Activated CD4-positive, alpha-beta memory T cell treated with anti-CD3 and anti-CD28 coated beads, Interleukin-2, amount 10 ng/mL, durations not matched to agents 7 days and 5 days (primary cell): ENCODE measurements at regions of chr3 and their contacts with region 1.

Region 1: DNA sequence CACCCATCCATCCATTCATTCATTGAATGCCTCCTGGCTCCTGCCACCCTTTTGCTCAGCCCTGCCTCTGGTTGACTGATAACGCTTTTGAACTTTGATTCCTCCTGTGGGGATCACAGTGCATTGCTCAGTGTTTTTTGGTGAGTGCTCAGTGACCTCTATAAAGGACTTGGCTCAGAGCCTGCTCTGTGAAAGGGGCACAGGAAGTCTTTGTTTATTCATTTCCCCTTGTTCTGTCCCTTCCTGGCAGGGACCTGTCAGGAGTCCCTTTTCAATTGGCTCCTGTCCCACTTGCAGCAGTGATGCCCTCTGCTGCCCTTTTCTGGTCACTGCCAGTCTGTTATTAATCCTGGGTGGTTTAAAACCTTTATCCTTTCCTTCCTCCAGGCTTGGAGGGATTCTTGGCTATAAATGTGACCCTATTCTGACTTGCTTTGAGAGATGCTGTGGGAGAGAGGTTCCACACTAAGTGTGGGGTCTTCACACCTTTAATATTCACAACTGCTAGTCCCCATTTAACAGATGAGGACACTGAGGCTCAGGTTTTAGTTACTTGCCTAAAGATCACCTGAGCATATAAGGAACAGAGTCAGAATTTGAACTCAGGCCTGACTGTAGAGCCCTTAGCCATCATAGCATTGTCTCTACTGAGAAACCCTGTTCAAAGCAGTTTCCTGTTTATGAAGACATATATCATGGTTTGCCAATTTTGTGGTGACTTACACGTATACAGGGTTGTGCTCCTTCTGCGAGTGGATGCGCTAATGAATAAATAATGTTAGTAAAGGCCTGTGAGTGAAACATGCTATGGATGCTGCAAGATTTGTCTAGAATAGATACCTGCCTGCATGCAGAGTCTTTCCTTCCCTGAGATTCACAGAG is 23.2 kb upstream of the TATDN2 start:
- DNase-seq: peak; percentile 76
- H3K4me3 Mint-ChIP-seq: peak overlapping the region; percentile 1
- H3K27ac Mint-ChIP-seq: peak overlapping the region; percentile 65
- H3K4me1 Mint-ChIP-seq: peaks cover 81% of the 10 kb centered on the region
- H3K27me3 Mint-ChIP-seq: no peaks in the 10 kb centered on the region

Region 2: DNA sequence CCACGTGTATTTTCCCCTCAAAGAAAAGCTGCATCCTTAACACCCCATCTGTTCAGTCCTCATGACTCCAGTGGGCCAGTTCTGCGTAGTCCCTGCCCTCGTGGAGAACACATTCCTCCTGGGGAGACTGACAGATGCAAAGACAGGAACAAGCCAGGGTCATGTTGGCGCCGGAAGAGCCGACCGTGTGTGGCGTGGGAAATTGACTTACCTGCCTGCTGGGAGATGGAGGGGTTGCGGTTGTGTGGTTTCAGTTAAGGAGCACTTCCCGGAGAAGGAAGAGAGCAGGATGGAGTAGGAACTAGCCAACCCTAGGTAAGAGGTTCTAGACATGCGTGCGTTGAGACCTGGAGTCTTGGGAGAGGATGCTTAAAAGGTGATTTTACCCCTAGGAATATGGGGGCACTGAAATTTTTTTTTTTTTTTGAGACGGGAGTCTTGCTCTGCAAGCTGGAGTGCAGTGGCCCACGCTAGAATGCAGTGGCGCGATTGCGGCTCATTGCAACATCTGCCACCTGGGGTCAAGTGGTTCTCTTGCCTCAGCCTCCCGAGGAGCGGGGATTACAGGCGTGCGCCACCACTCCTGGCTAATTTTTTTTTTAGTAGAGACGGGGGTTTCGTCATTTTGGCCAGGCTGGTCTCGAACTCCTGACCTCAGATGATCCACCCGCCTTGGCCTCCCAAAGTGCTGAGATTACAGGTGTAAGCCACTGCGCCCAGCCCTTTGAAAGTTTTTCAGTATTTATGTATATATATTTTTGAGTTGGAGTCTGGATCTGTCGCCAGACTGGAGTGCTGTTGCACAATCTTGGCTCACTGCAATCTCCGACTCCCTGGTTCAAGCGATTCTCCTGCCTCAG is 82.1 kb before region 1 on chr3:
- CTCF ChIA-PET with region 1: interaction called, 10 read pairs
- POLR2A ChIA-PET with region 1: interaction called, 11 read pairs
- DNase-seq: peak; percentile 32
- H3K4me3 Mint-ChIP-seq: peak overlapping the region; percentile 85
- H3K27ac Mint-ChIP-seq: peak overlapping the region; percentile 96
- H3K4me1 Mint-ChIP-seq: peaks cover 42% of the 10 kb centered on the region
- H3K27me3 Mint-ChIP-seq: no peaks in the 10 kb centered on the region

Region 3: GRCh38 chr3:10185804-10186762 is 38.9 kb before region 1 on chr3:
- CTCF ChIA-PET with region 1: interaction called, 12 read pairs
- POLR2A ChIA-PET with region 1: interaction called, 71 read pairs
- DNase-seq: peak; percentile 33
- H3K4me3 Mint-ChIP-seq: peak overlapping the region; percentile 18
- H3K27ac Mint-ChIP-seq: peak overlapping the region; percentile 78
- H3K4me1 Mint-ChIP-seq: peaks cover 55% of the 10 kb centered on the region
- H3K27me3 Mint-ChIP-seq: no peaks in the 10 kb centered on the region

Region 4: DNA sequence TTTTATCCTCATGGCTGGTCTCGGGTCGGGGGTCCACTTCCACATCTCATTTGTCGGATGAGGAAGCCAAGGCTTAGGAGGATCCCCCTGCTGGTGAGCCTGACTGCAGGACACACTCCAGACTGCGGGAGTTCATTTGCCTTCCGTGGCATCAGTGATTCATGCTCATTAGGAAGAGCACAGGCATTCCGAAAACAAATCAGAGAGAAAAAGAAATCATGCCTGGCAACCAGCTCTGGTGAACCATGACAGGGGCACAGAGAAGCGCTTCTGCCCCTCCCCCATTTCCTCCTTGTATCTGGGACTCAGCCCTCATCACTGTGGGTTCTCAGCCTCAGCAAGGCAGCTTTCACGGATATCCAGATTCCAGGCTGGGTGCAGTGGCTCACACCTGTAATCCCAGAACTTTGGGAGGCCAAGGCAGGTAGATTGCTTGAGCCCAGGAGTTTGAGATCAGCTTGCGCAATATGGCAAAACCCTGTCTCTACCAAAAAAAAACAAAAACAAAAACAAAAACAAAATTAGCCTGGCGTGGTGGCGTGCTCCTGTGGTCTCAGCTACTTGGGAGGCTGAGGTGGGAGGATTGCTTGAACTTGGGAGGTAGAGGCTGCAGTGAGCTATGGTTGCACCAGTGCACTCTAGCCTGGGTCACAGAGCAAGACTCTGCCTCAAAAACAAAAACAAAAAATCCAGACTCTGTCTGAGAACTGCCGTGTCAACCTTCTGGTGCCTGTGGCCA is 31.9 kb before region 1 on chr3:
- CTCF ChIA-PET with region 1: interaction called, 13 read pairs
- POLR2A ChIA-PET with region 1: interaction called, 71 read pairs
- DNase-seq: peak; percentile 69
- H3K4me3 Mint-ChIP-seq: peak overlapping the region; percentile 7
- H3K27ac Mint-ChIP-seq: peak overlapping the region; percentile 98
- H3K4me1 Mint-ChIP-seq: peaks cover 82% of the 10 kb centered on the region
- H3K27me3 Mint-ChIP-seq: no peaks in the 10 kb centered on the region

Region 5: GRCh38 chr3:10213156-10213792 is 11.8 kb before region 1 on chr3:
- CTCF ChIA-PET with region 1: interaction called, 4 read pairs
- POLR2A ChIA-PET with region 1: interaction called, 10 read pairs
- DNase-seq: no peak
- H3K4me3 Mint-ChIP-seq: no peak overlapping the region
- H3K27ac Mint-ChIP-seq: no peak overlapping the region
- H3K4me1 Mint-ChIP-seq: peaks cover 14% of the 10 kb centered on the region
- H3K27me3 Mint-ChIP-seq: no peaks in the 10 kb centered on the region

Region 6: DNA sequence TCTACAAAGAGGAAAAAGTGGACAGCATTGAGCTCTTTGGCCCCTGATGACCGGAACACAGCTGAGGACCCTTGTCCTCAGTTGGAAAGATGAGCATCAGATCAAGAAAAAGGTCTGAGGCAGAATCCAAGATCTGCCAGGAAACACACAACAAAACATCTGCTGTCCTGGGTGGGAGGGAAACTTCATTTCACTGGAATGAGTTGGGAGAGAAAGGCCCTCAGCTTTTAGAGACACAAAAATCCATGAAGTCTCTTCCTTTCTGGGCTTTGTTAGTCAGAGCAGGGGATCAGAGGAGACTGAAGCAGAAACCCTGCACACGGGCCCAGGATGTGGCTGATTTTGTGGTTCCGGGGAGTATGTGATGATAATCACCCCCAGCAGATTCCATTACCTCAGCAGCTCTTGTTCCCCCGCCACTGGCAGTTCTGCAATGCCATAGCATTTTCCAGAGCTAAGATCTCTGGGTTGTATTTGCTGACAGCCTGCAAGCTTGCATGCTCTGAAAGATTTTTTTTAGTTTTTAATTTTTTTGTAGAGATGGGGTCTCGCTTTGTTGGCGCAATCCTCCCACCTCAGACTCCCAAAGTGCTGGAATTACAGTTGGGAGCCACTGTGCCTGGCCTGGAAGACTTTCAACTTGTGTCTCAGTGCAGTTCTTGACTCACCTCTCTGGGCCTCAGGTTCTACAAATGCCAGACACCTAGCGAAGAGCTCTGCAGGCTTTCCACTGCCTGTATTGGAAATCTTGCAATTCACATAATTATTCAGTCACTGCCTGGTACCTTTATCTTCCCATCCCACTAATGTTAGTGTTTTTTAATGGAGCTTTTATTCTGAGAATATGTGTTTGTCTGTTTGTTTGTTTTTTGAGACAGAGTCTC is 17.4 kb after region 1 on chr3:
- CTCF ChIA-PET with region 1: interaction called, 7 read pairs
- POLR2A ChIA-PET with region 1: interaction called, 20 read pairs
- DNase-seq: peak; percentile 89
- H3K4me3 Mint-ChIP-seq: peak overlapping the region; percentile 39
- H3K27ac Mint-ChIP-seq: peak overlapping the region; percentile 95
- H3K4me1 Mint-ChIP-seq: peaks cover 62% of the 10 kb centered on the region
- H3K27me3 Mint-ChIP-seq: no peaks in the 10 kb centered on the region

Region 7: DNA sequence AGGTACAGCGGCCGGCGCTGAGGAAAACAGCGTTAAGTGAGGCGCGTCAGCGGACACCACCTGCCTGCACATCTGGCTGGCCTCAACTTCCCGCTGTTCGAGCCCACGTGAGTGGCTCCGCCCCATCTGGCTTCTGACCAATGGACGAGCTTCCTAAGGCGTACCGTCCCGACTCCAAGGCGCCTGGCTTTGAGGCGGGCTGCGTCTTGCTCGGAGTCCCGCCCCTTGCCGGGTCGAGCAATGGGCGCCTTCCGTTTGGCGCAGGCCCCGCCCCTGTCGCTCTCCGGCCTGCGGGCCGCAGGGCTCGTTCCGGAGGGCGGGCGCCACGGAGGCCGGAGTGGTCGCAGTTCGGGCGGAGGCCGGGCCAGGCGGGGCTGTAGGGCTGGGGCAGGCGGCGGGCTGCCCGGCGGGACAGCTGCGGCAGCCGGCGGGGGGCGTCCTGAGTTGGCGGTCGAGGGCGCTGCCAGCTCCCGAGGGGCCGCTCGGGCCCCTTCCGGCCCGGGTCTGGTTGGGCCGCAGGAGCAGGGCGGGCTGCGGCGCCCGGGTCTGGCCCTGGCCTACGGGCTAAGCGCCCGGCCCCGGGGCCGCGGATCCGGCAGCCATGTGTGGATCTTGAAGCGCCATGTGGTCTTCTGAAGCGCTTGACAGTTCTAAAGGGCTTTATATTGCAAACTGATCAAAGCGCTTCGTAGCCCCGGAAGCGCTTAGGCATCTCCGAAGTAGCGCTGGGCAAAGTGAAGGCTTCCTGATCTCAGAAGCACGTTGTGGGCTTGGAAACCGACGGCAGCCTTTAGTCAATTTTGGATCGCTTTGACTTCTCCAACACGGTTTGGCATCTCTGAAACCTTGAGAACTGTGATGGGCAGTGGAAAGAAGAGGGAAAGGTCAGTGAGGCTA is 23.4 kb after region 1 on chr3 and contains the start of gene TATDN2:
- CTCF ChIA-PET with region 1: interaction called, 7 read pairs
- POLR2A ChIA-PET with region 1: interaction called, 20 read pairs
- DNase-seq: peak; percentile 96
- H3K4me3 Mint-ChIP-seq: peak within 1 kb of the TSS; percentile 98
- H3K27ac Mint-ChIP-seq: peak within 1 kb of the TSS; percentile 92
- H3K4me1 Mint-ChIP-seq: peaks cover 55% of the 10 kb centered on the region
- H3K27me3 Mint-ChIP-seq: no peaks in the 10 kb centered on the region
- total RNA-seq, gene TATDN2: 57.1 to 59.5 TPM